ENCODE measurements at regions of chr15 and their contacts with region 1.

Region 1: GRCh38 chr15:85689729-85690128 is 105.0 kb downstream of the KLHL25 start:
- DNase-seq: peak; percentile 46
- ATAC-seq: peak; percentile 59
- H3K4me3 Mint-ChIP-seq: peak overlapping the region; percentile 95
- H3K27ac Mint-ChIP-seq: peak overlapping the region; percentile 98
- H3K4me1 Mint-ChIP-seq: peaks cover 78% of the 10 kb centered on the region
- H3K27me3 Mint-ChIP-seq: no peaks in the 10 kb centered on the region
- CTCF ChIP-seq: no peak

Region 2: GRCh38 chr15:85412956-85413854 is 276.5 kb before region 1 on chr15:
- CTCF ChIA-PET with region 1: interaction called, 3 read pairs
- POLR2A ChIA-PET with region 1: interaction called, 3 read pairs
- intact Hi-C with region 1: loop called (anchors 2 kb)
- DNase-seq: peak; percentile 50
- ATAC-seq: peak; percentile 94
- H3K4me3 Mint-ChIP-seq: peak overlapping the region; percentile 48
- H3K27ac Mint-ChIP-seq: peak overlapping the region; percentile 87
- H3K4me1 Mint-ChIP-seq: peaks cover 73% of the 10 kb centered on the region
- H3K27me3 Mint-ChIP-seq: no peaks in the 10 kb centered on the region
- CTCF ChIP-seq: no peak

Region 3: DNA sequence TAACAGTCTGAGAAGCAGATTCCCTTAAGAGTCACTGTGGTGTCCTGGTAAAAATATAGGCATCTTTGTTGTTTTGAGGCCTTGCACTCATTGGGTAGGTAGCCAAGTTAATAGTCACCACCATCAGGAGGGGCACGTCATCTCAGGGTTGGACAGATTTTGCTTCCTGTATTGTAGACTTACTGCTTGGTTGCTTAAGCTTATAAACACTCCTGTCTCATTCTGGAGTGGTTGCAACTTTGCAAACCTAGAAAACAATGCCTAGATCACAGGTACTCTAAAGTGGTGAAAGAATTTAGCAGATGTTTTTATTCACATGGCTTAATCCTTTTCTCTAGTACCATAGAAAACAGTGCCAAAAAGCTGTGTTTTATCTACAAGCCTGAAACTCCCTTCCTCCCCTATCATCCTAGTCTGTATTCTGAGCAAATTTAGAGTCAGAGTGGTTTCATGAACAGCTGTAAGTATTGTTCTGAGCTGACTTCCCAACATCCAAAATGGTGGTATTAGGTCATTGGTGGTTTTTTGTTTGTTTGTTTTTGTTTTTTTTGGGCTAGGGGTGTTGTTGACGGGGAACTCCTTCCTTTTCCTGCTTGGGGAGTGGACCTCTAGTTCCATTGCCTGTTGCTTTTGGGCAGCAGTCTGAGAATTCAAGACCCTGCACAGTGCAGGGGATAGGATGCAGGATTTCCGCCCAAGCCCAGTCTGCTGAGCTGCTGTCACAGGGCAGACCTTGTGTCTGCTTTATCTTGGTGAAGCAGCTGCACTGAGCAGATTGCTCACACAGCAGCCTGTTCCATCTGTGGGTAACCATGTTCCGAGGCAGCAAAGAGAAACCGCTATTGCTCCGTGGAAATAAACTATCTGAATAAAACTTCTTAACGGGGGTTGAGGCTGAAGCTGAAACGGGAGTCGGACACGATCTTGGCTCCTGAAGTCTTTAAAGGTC is 107.3 kb before region 1 on chr15:
- CTCF ChIA-PET with region 1: no interaction called
- POLR2A ChIA-PET with region 1: interaction called, 31 read pairs
- intact Hi-C with region 1: loop called (anchors 5 kb)
- DNase-seq: no peak
- ATAC-seq: peak; percentile 59
- H3K4me3 Mint-ChIP-seq: peak overlapping the region; percentile 83
- H3K27ac Mint-ChIP-seq: peak overlapping the region; percentile 90
- H3K4me1 Mint-ChIP-seq: peaks cover 76% of the 10 kb centered on the region
- H3K27me3 Mint-ChIP-seq: no peaks in the 10 kb centered on the region
- CTCF ChIP-seq: no peak

Region 4: DNA sequence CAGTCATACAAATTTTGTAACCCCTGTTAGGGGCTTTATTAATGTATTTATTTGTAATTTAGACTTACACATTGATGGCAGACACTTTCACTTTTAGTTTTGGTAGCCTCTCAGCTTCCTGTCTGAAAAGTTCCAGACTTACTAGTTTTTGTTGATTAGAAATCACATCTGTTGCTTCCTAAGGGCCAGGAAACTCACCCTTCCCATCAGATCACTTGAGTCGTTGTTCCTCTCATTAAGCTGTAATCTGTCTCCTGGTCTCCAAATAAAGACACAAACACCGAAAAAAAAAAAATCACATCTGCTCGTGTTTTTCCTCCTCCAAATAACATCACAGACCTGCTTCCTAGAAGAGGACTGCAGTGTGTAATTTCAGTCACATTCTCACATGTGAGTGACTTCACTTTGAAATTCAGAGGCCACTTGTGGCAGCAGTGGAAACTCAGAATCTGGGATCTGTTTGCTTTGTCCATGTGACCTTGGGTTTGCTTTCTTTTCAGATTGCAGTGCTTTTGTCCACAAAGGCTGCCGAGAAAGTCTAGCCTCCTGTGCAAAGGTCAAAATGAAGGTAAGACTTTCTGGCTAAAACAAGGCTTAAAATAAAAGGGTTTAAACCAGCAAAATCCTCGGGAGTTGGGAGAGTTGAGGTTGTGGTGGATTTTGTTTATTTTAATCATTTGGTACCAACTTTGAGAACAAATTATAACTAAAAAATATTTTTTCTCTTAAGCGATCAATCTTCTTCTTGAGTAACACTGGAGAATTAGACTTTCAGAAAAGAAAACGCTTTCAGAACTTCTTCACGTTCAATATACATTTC is 18.0 kb after region 1 on chr15:
- CTCF ChIA-PET with region 1: interaction called, 7 read pairs
- POLR2A ChIA-PET with region 1: interaction called, 298 read pairs
- intact Hi-C with region 1: loop called (anchors 1 kb)
- DNase-seq: no peak
- ATAC-seq: peak; percentile 23
- H3K4me3 Mint-ChIP-seq: peak overlapping the region; percentile 83
- H3K27ac Mint-ChIP-seq: peak overlapping the region; percentile 98
- H3K4me1 Mint-ChIP-seq: peaks cover 83% of the 10 kb centered on the region
- H3K27me3 Mint-ChIP-seq: no peaks in the 10 kb centered on the region
- CTCF ChIP-seq: no peak

Region 5: DNA sequence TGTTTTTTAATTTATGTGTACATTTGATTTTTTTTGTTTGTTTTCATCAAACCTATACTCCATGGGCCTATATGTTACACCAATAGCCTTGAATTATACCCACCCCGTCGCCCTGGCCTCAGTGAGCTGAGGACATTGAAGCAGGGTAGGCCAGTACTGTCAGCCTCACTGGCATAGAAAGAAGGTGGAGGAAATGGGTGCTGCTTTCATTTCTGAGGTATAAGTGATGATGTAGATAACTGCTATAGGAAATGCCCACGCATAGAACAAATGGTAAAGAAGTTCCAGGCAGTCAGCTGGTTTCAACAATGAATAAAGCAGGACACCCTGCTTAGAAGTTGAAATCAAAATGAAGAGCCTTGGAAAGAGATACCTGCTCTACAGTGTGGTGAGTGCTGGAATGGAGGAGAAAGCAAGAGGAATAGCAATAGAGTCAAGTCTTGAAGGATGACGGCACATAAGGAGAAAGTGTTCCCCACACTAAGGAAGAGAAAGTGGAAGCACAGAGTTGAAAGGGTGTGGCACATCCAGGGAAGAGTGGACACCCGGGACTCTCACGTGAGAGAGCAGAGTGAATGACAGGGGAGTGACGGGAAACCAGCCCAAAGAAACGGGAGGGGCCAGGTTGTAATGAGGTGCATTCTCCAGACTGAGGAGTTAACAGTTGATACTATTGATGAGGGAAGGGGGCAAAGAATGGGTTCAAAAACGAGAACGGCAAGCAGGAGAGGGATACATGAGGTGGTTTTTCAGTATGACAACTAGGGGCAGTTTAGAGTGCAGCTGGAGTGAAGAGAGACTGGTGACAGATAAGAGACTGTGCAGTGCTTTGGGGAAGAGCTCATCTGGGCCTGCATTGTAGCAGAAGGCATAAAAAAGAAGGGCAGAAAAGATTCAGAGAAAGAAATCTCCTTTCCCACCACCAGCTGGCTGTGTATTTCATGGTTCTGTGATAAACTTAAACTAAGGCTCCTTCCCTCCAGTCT is 34.5 kb after region 1 on chr15:
- CTCF ChIA-PET with region 1: interaction called, 3 read pairs
- POLR2A ChIA-PET with region 1: interaction called, 11 read pairs
- intact Hi-C with region 1: loop called (anchors 5 kb)
- DNase-seq: no peak
- ATAC-seq: no peak
- H3K4me3 Mint-ChIP-seq: no peak overlapping the region
- H3K27ac Mint-ChIP-seq: peak overlapping the region; percentile 68
- H3K4me1 Mint-ChIP-seq: peaks cover 12% of the 10 kb centered on the region
- H3K27me3 Mint-ChIP-seq: no peaks in the 10 kb centered on the region
- CTCF ChIP-seq: no peak